Sigmoid colon (tissue), 7 donors: ENCODE measurements at regions of chr7 and their contacts with region 1.

Region 1: GRCh38 chr7:992709-993607 is 10.0 kb downstream of the CYP2W1 start:
- DNase-seq: peak; percentile 98
- H3K4me3 ChIP-seq: no peak overlapping the region
- H3K27ac ChIP-seq: no peak overlapping the region
- H3K4me1 ChIP-seq: peaks cover 0 to 18% (median 7%) of the 10 kb centered on the region in 4 donors
- H3K27me3 ChIP-seq: peaks cover 10 to 17% (median 17%) of the 10 kb centered on the region in 3 donors
- CTCF ChIP-seq: peak; percentile 100
- EP300 ChIP-seq: no peak
- POLR2A ChIP-seq: no peak

Region 2: DNA sequence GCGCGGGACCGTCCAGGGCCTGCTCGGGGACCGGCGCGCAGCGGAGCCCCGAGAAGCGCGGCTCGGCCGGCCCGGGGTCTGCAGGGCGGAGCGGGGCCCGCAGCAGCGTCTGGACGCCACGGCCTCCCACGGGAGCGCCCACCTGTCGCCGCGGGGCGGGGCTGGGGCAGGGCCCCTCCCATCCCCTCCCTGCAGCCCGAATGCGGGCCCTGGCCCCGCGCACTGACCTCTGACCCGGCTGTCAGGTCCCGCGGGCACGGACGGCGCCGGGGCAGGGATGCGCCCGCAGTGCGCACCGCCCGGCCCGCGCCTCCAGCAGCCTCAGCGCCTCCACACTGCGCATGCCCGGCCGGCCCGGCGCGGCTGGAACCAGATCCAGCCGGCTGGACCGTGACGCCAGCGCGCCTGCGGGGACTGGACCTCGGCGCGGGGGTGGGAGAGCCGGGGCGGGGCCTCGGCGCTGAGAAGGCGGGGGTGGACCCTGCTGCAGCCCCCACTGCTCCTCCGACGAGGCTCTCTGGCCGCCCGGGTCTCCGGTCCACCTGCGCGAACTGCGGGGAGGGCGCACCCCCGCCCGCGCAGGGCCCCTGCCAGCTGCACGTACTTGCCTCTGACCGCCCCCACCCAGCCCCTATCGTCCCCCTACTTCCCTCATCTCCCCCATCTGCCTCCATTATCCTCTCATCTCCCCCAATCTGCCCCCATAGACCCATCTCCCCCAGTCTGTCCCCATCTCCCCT is 35.2 kb after region 1 on chr7:
- intact Hi-C with region 1: loop called (anchors 5 kb)
- DNase-seq: peak; percentile 95
- H3K4me3 ChIP-seq: peak overlapping the region; percentile 47 to 97 (median 74)
- H3K27ac ChIP-seq: peak overlapping the region; percentile 93 to 97 (median 96)
- H3K4me1 ChIP-seq: peaks cover 0 to 44% (median 25%) of the 10 kb centered on the region in 4 donors
- H3K27me3 ChIP-seq: no peaks in the 10 kb centered on the region
- CTCF ChIP-seq: no peak
- EP300 ChIP-seq: peak in 2 of 4 donors; percentile 26 to 58
- POLR2A ChIP-seq: peak in 1 of 2 donors; percentile 13

Region 3: GRCh38 chr7:1065263-1066260 is 72.6 kb after region 1 on chr7:
- intact Hi-C with region 1: loop called (anchors 1 kb)
- DNase-seq: peak; percentile 92
- H3K4me3 ChIP-seq: peak overlapping the region in 3 of 4 donors; percentile 25 to 26 (median 26)
- H3K27ac ChIP-seq: no peak overlapping the region
- H3K4me1 ChIP-seq: peaks cover 0 to 16% (median 11%) of the 10 kb centered on the region in 4 donors
- H3K27me3 ChIP-seq: no peaks in the 10 kb centered on the region
- CTCF ChIP-seq: peak; percentile 95 to 97 (median 96)
- EP300 ChIP-seq: no peak
- POLR2A ChIP-seq: no peak

Region 4: GRCh38 chr7:1175967-1176851 is 183.3 kb after region 1 on chr7:
- intact Hi-C with region 1: loop called (anchors 5 kb)
- DNase-seq: peak; percentile 88
- H3K4me3 ChIP-seq: peak overlapping the region in 3 of 4 donors; percentile 21 to 36 (median 28)
- H3K27ac ChIP-seq: peak overlapping the region in 3 of 4 donors; percentile 26 to 43 (median 42)
- H3K4me1 ChIP-seq: peaks cover 0 to 12% (median 7%) of the 10 kb centered on the region in 4 donors
- H3K27me3 ChIP-seq: peaks cover 0 to 6% (median 3%) of the 10 kb centered on the region in 3 donors
- CTCF ChIP-seq: peak; percentile 80 to 96 (median 86)
- EP300 ChIP-seq: no peak
- POLR2A ChIP-seq: no peak